Gastrocnemius medialis (tissue), 4 donors: ENCODE measurements at regions of chr1 and their contacts with region 1.

Region 1: DNA sequence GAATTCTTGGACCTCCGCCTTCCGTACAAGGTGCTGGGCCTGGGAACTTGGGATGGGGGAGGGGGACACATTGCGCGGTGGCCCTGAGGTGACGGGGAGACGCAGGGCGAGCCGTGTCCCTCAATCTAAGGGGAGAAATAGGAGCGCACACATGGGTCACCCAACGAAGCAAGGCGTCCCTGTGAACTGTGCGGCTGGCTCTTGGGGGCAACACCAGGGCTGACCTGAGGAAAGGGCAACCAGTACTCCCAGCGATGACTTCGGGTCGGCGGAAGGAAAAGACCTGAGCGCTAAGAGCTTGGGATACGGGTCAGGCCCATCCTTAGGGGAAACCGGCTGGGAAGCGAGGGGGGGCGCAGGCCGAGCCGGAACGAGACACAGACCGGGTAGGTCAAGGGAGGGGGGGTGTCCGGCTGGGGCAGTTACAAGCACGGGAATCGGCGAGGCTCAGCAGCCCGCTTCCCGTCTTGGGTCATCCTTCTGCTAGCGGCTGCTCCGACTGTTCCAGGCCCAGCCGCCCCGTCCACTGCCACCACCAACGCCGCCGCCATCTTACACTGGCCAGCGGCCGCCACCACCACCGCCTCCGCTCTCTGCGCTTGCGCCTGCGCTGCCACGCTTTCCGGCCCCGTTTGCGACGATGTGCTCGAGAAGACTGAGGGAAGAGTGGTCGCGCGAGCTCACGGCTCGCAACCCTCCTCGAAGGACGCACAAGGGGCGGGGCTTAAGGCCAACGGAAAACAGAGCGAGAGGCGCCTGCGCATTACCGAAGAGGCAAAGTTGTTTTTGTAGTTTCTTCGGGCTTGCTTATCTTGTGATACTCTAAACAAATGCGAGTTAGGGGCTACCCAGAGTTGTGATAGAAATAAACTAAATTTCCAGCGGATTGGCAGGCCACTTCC is at the start of gene DCAF8:
- DNase-seq: peak; percentile 97 to 98
- ATAC-seq: peak; percentile 80 to 89
- H3K4me3 ChIP-seq: peak within 1 kb of the TSS; percentile 74 to 91 (median 84)
- H3K27ac ChIP-seq: peak within 1 kb of the TSS; percentile 96 to 99 (median 96)
- H3K4me1 ChIP-seq: peaks cover 43 to 46% of the 10 kb centered on the region in 2 donors
- H3K27me3 ChIP-seq: no peaks in the 10 kb centered on the region
- CTCF ChIP-seq: no peak
- POLR2A ChIP-seq: peak; percentile 97 to 99
- total RNA-seq, gene DCAF8: 170 to 208 (median 196) TPM

Region 2: DNA sequence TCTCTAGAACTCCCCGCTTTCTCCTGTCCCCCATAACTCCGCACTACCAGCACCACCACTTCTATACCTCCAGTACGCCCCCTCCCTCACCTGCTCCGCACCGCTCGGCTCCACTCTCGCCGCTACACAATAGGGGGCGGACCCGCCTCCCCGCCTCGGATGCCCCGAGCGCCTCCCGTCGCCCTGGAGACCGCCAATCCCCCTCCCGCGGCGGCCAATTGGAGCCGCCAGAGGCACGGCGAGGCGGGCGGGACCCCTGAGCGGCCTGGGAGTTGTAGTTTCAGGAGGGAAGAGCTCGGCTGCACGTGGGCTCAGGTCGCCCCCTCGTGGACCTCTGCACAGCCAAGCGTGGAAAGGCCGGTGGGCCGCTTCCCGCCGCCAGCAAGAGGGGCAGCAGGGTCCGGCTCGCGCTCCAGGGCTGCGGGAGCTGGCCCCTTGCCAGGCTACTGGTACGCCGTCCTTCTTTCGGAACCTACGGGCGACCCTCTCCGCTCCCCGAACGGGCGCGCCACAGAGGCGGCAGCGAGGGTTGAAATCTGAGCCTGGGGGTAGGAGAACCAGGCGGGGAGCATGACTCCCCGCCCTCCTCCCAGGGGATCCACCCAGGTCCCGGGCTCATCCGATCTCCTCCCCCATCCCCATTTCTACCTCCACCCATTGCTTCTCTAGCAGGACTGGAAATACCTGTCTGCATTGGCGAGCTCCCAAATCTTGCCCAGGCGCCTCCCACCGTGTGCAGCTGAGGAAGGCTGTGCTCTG is 316.5 kb before region 1 on chr1 and contains the start of gene IGSF9:
- in situ Hi-C with region 1: no loop called
- intact Hi-C with region 1: no loop called
- DNase-seq: no peak
- ATAC-seq: peak; percentile 63 to 66
- H3K4me3 ChIP-seq: peak within 1 kb of the TSS; percentile 45 to 62 (median 50)
- H3K27ac ChIP-seq: no peak within 1 kb of the TSS
- H3K4me1 ChIP-seq: peaks cover 0 to 15% of the 10 kb centered on the region in 2 donors
- H3K27me3 ChIP-seq: peaks cover 24 to 27% (median 24%) of the 10 kb centered on the region in 3 donors
- CTCF ChIP-seq: peak; percentile 7 to 64 (median 48)
- POLR2A ChIP-seq: no peak
- total RNA-seq, gene IGSF9: 0.10 to 0.11 TPM in 2 of 4 donors, not detected in the others

Region 3: GRCh38 chr1:160284782-160285344 is 22.7 kb after region 1 on chr1 and contains the start of gene PEX19:
- in situ Hi-C with region 1: no loop called
- intact Hi-C with region 1: loop called (anchors 1 kb)
- DNase-seq: peak; percentile 90 to 92
- ATAC-seq: peak; percentile 95 to 96
- H3K4me3 ChIP-seq: peak within 1 kb of the TSS; percentile 65 to 91 (median 82)
- H3K27ac ChIP-seq: peak within 1 kb of the TSS; percentile 79 to 86 (median 84)
- H3K4me1 ChIP-seq: peaks cover 11 to 17% of the 10 kb centered on the region in 2 donors
- H3K27me3 ChIP-seq: no peaks in the 10 kb centered on the region
- CTCF ChIP-seq: no peak
- POLR2A ChIP-seq: peak; percentile 64 to 69
- total RNA-seq, gene PEX19: 61.9 to 151 (median 82.4) TPM

Region 4: DNA sequence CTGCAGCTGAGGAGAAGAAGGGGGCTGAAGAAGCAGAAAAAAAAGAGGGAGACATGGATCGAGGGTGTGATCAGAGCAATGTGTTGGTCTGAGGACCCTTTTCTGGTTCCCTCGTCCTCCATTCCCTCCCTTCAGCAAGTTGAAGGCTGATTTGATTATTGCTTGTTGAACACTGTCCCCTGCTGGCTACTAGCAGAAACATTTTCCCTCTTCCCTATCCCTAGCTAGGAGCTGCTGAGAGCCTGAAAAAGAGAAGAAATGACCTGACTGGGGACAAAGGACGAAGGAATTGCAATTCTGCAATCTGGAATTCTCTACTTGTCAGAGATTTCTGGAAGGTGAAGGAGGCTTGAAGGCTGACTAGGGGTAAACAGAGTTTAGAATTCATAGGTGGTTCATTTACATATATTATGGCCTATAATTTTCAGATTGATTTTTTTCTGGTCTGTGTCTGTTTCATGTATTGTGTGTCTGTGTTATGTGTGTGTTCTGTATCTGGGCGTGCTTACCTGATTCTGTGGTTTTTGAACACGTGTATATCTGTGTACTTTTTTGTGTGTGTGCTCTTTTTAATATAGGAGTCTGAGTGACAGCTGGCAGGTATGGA is 114.5 kb after region 1 on chr1:
- in situ Hi-C with region 1: no loop called
- intact Hi-C with region 1: no loop called
- DNase-seq: no peak
- ATAC-seq: peak; percentile 85 to 96
- H3K4me3 ChIP-seq: no peak overlapping the region
- H3K27ac ChIP-seq: no peak overlapping the region
- H3K4me1 ChIP-seq: peaks cover 0 to 9% of the 10 kb centered on the region in 2 donors
- H3K27me3 ChIP-seq: no peaks in the 10 kb centered on the region
- CTCF ChIP-seq: peak; percentile 83 to 96 (median 87)
- POLR2A ChIP-seq: no peak